ENCODE measurements at regions of chr19 and their contacts with region 1.

Region 1: GRCh38 chr19:54102421-54103169 is at the start of gene NDUFA3:
- DNase-seq: peak; percentile 98 to 100 (median 99)
- H3K4me3 ChIP-seq: peak within 1 kb of the TSS; percentile 51 to 97 (median 68)
- H3K4me3 Mint-ChIP-seq: peak within 1 kb of the TSS; percentile 95 to 98
- H3K27ac ChIP-seq: peak within 1 kb of the TSS; percentile 73 to 87
- H3K27ac Mint-ChIP-seq: peak within 1 kb of the TSS; percentile 92 to 98 (median 98)
- H3K4me1 ChIP-seq: peaks cover 55 to 59% of the 10 kb centered on the region in 2 donors
- H3K4me1 Mint-ChIP-seq: peaks cover 49% of the 10 kb centered on the region
- H3K27me3 ChIP-seq: no peaks in the 10 kb centered on the region
- H3K27me3 Mint-ChIP-seq: no peaks in the 10 kb centered on the region
- CTCF ChIP-seq: no peak
- polyA plus RNA-seq, gene NDUFA3: 46.4 to 396 (median 333) TPM

Region 2: DNA sequence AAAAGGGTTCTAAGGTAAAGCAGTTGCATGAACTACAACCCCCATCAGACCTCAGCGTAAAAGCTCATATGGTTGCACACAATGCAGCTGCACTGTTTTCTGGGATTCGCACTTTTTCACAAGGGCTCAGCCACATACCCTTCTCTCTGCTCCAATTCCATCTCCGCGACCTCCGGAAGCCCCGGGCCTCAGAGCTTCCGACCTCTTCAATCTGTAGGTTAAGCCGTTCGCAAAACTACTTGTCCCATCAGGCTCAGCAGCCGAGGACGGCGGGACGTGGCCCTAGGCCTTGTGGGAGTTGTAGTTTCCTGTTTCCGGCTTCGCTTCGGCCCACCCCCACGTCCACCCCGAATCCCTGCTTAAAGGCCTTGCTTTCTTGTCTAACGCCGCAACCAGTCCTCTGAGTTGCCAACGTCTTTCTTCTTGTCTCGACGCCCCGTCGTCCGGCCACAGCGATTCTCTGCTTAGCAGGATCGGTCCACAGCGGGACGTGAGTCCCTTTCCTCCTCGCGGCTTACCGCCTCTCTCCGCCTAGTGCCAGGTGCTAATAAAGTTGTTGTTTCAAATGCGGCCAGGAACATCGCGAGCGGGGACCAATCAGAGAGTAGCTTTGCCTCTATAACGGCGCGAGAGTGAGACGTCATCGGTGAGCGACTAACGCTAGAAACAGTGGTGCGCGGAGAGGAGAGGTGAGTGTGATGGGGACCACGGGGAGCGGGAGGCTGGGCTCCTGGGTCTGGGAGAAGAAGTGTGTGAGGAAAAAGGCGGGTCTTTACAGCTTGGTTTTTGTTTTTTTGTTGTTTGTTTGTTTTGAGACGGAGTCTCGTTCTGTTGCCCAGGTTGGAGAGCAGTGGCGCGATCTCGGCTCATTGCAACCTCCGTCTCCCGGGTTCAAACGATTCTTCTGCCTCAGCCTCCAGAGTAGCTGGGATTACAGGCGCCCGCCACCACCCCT is 12.8 kb after region 1 on chr19 and contains the starts of genes PRPF31 and TFPT:
- intact Hi-C with region 1: loop called (anchors 1 to 2 kb)
- DNase-seq: peak; percentile 97 to 98 (median 98)
- H3K4me3 ChIP-seq: peak within 1 kb of the TSS; percentile 52 to 94 (median 83)
- H3K4me3 Mint-ChIP-seq: peak within 1 kb of the TSS; percentile 90 to 98
- H3K27ac ChIP-seq: peak within 1 kb of the TSS; percentile 70 to 84
- H3K27ac Mint-ChIP-seq: peak within 1 kb of the TSS; percentile 94 to 98 (median 98)
- H3K4me1 ChIP-seq: peaks cover 19 to 27% of the 10 kb centered on the region in 2 donors
- H3K4me1 Mint-ChIP-seq: peaks cover 29% of the 10 kb centered on the region
- H3K27me3 ChIP-seq: no peaks in the 10 kb centered on the region
- H3K27me3 Mint-ChIP-seq: peaks cover 0 to 3% (median 0%) of the 10 kb centered on the region in 3 donors
- CTCF ChIP-seq: no peak
- polyA plus RNA-seq, gene PRPF31: 34.4 to 51.8 (median 37.6) TPM
- polyA plus RNA-seq, gene TFPT: 7.0 to 11.5 (median 9.5) TPM

Region 3: DNA sequence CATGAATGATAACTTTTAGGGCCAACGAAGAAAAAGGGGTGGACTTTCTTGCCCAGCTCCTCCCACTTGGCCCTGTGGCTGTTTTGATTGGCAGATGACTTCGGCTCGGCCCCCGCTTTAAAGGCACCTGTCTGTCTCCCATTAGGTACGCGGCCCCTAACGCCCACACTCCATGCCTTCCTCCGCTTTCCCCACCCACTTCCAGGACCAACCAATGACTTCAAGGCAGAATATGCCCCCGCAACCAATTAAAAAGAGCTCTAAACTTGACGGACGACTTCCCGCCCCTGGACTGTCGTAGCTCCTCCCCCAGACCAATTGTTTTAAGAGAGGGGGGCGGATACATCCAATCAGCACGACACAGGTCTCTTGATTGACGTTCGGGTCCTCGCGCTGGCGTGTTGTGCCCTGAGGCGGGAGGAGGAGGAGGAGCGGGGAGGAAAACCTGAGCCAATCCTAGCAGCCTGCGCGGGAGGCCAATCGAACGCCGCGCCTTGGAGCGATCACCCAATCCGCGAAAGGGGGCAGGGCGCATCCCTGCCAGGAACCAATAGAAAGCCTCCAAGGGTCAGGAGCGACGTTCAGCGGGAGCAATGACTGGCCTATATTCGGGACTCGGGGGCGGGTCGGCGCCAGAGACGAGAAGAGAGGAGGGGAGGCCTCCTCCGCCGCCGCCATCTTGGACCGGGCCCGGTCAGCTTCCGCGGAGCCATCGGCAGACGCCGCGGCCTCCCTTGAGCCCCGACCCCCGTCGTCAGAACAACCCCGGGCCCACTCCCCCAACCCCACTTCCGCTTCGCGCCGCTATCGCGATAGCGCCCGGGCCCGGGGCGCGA is 34.7 kb after region 1 on chr19 and contains the start of gene CNOT3:
- intact Hi-C with region 1: loop called in 1 of 2 experiments (anchors 1 kb)
- DNase-seq: peak; percentile 100
- H3K4me3 ChIP-seq: peak within 1 kb of the TSS; percentile 66 to 92 (median 87)
- H3K4me3 Mint-ChIP-seq: peak within 1 kb of the TSS; percentile 82 to 93
- H3K27ac ChIP-seq: peak within 1 kb of the TSS; percentile 21 to 91
- H3K27ac Mint-ChIP-seq: peak within 1 kb of the TSS; percentile 82 to 95 (median 94)
- H3K4me1 ChIP-seq: peaks cover 28 to 39% of the 10 kb centered on the region in 2 donors
- H3K4me1 Mint-ChIP-seq: peaks cover 38% of the 10 kb centered on the region
- H3K27me3 ChIP-seq: peaks cover 0 to 3% of the 10 kb centered on the region in 2 donors
- H3K27me3 Mint-ChIP-seq: peaks cover 2 to 12% (median 2%) of the 10 kb centered on the region in 3 donors
- CTCF ChIP-seq: no peak
- polyA plus RNA-seq, gene CNOT3: 3.0 to 22.5 (median 4.2) TPM

Measured in CD14-positive monocyte (primary cell).